Activated CD4-positive, alpha-beta memory T cell treated with anti-CD3 and anti-CD28 coated beads, Interleukin-2, amount 10 ng/mL, durations not matched to agents 7 days and 5 days (primary cell): ENCODE measurements at regions of chr6 and their contacts with region 1.

Region 1: DNA sequence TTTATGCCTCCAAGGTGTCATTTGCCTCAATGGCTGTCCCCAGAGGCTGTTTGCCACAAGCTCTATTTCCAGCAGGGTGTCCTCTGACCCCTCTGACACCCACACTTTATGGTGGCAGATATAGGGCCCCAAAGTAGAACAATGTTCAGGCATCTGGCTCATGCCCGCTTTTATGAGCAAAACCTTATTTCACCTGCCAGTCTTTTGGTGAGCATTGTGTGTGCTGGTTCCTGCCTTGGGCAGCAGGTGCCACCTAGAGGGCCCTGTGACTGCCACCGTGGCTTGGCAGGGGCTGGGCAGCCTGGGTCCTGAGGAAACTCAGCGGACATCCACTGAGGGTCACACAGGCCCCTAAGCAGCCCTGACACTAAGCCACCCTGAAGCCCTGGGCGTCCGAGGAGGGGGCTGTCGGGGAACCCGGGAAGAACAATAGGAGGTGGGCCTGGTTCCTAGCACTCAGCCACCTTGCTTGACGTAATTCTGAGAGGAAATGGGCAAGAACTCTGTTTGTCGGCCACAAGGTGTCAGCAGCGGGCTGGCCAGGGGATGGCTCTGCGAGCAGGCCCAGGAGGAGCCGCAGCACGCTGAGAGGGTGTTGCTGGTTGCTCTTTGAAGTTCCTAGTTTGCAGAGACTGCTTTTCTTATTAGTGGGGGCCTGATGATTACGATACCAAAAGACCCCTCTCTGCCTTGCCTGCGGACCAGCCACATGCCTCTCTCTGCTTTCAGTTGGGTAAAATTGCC is 148.9 kb downstream of the SCML4 start:
- DNase-seq: peak; percentile 89
- H3K4me3 Mint-ChIP-seq: no peak overlapping the region
- H3K27ac Mint-ChIP-seq: peak overlapping the region; percentile 50
- H3K4me1 Mint-ChIP-seq: peaks cover 21% of the 10 kb centered on the region
- H3K27me3 Mint-ChIP-seq: peaks cover 2% of the 10 kb centered on the region

Region 2: DNA sequence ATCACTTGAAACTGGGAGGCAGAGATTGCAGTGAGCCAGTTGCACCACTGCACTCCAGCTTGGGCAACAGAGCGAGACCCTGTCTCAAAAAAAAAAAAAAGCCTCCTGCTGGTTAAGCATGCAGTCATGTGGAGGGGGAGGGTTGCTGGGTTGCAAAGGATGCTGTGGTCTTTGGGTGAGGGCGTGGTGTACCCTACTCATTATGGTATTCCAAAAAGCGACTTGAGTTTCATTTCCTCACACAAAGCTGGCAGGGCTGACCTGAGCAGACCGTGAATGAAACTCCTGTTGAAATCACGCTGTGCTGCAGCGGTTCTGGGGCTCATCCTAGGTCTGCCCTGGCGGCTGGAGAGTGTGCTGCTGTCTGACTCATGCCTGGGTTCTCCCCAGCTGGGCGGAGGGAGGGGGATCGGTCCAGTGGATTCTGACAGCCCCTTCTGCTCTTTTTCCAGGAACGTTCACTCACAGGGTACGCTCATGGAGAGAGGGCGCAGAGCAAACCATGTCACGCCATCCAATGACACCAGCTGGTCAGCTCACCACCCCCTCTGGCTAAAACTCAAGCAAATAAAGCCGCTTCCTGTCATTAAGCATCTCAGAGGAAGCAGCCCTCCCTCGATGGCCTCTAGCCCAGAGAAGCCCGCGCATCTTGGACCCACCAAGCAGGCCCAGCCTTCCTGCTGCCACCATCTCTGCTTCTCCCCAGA is 17.3 kb before region 1 on chr6:
- CTCF ChIA-PET with region 1: interaction called, 7 read pairs
- POLR2A ChIA-PET with region 1: interaction called, 16 read pairs
- DNase-seq: peak; percentile 83
- H3K4me3 Mint-ChIP-seq: peak overlapping the region; percentile 66
- H3K27ac Mint-ChIP-seq: peak overlapping the region; percentile 92
- H3K4me1 Mint-ChIP-seq: peaks cover 39% of the 10 kb centered on the region
- H3K27me3 Mint-ChIP-seq: peaks cover 19% of the 10 kb centered on the region

Region 3: GRCh38 chr6:107866606-107867301 is 191.6 kb after region 1 on chr6:
- CTCF ChIA-PET with region 1: interaction called, 20 read pairs
- POLR2A ChIA-PET with region 1: interaction called, 3 read pairs
- DNase-seq: no peak
- H3K4me3 Mint-ChIP-seq: no peak overlapping the region
- H3K27ac Mint-ChIP-seq: no peak overlapping the region
- H3K4me1 Mint-ChIP-seq: peaks cover 2% of the 10 kb centered on the region
- H3K27me3 Mint-ChIP-seq: no peaks in the 10 kb centered on the region